ENCODE measurements at regions of chr12 and their contacts with region 1.

Region 1: DNA sequence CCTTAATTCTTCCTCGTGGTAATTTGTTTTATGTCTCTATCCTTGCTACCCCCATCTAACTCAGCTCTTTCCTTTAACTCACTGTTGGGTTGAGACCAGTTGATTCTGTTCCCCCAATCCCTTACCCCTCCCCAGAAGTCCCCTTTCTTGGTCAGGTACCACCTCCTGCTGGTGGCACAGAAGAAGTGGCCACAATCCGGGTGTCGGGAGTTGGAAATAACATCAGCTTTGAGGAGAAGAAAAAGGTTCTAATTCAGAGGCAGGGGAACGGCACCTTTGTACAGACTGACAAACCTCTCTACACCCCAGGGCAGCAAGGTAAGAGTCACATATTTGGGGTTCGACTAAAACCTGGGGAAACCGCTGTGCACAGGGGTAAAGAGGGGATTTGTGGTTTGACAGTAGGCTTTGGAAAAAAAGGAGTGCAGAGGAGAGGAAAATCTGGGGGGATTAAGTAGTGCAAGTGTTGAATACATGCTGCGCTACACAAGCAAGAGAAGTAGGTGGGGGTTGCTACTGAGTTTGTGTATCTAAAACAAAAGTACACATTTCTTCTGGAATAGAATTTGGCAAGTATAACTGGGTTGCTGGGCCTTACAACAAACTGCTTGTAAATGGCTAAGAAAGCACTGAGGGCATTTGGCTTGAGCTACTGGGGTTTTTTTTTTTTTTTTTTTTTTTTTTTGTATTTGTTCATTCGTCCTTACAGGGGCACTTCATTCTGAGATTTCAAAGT is 1.3 kb downstream of the A2ML1 start:
- DNase-seq: no peak
- H3K4me3 ChIP-seq: no peak overlapping the region
- H3K27ac ChIP-seq: no peak overlapping the region
- H3K4me1 ChIP-seq: no peaks in the 10 kb centered on the region
- H3K27me3 ChIP-seq: no peaks in the 10 kb centered on the region
- CTCF ChIP-seq: peak in 8 of 11 experiments; percentile 38 to 69 (median 45)
- POLR2A ChIP-seq: no peak

Region 2: GRCh38 chr12:8681041-8681902 is 142.5 kb before region 1 on chr12:
- intact Hi-C with region 1: loop called (anchors 5 kb)
- DNase-seq: no peak
- H3K4me3 ChIP-seq: no peak overlapping the region
- H3K27ac ChIP-seq: peak overlapping the region in 1 of 8 donors; percentile 1
- H3K4me1 ChIP-seq: peaks cover 0 to 19% (median 10%) of the 10 kb centered on the region in 6 donors
- H3K27me3 ChIP-seq: no peaks in the 10 kb centered on the region
- CTCF ChIP-seq: no peak
- POLR2A ChIP-seq: no peak

Region 3: GRCh38 chr12:8969861-8970412 is 146.2 kb after region 1 on chr12:
- intact Hi-C with region 1: no loop called
- DNase-seq: no peak
- H3K4me3 ChIP-seq: no peak overlapping the region
- H3K27ac ChIP-seq: no peak overlapping the region
- H3K4me1 ChIP-seq: no peaks in the 10 kb centered on the region
- H3K27me3 ChIP-seq: no peaks in the 10 kb centered on the region
- CTCF ChIP-seq: no peak
- POLR2A ChIP-seq: no peak

Region 4: GRCh38 chr12:9022592-9022991 is 198.9 kb after region 1 on chr12:
- intact Hi-C with region 1: no loop called
- DNase-seq: no peak
- H3K4me3 ChIP-seq: no peak overlapping the region
- H3K27ac ChIP-seq: peak overlapping the region in 1 of 8 donors; percentile 81
- H3K4me1 ChIP-seq: peaks cover 0 to 41% (median 22%) of the 10 kb centered on the region in 6 donors
- H3K27me3 ChIP-seq: no peaks in the 10 kb centered on the region
- CTCF ChIP-seq: no peak
- POLR2A ChIP-seq: no peak

Measured in spleen (tissue), 13 donors.